ENCODE measurements at regions of chr4 and their contacts with region 1.

Region 1: GRCh38 chr4:139651282-139652194 is 14.1 kb upstream of the MGST2 start:
- DNase-seq: peak; percentile 52
- H3K4me3 Mint-ChIP-seq: no peak overlapping the region
- H3K27ac Mint-ChIP-seq: no peak overlapping the region
- H3K4me1 Mint-ChIP-seq: peaks cover 8% of the 10 kb centered on the region
- H3K27me3 Mint-ChIP-seq: no peaks in the 10 kb centered on the region

Region 2: GRCh38 chr4:139416073-139416673 is 235.4 kb before region 1 on chr4:
- intact Hi-C with region 1: loop called (anchors 10 kb)
- DNase-seq: no peak
- H3K4me3 Mint-ChIP-seq: no peak overlapping the region
- H3K27ac Mint-ChIP-seq: no peak overlapping the region
- H3K4me1 Mint-ChIP-seq: peaks cover 8% of the 10 kb centered on the region
- H3K27me3 Mint-ChIP-seq: no peaks in the 10 kb centered on the region

Region 3: DNA sequence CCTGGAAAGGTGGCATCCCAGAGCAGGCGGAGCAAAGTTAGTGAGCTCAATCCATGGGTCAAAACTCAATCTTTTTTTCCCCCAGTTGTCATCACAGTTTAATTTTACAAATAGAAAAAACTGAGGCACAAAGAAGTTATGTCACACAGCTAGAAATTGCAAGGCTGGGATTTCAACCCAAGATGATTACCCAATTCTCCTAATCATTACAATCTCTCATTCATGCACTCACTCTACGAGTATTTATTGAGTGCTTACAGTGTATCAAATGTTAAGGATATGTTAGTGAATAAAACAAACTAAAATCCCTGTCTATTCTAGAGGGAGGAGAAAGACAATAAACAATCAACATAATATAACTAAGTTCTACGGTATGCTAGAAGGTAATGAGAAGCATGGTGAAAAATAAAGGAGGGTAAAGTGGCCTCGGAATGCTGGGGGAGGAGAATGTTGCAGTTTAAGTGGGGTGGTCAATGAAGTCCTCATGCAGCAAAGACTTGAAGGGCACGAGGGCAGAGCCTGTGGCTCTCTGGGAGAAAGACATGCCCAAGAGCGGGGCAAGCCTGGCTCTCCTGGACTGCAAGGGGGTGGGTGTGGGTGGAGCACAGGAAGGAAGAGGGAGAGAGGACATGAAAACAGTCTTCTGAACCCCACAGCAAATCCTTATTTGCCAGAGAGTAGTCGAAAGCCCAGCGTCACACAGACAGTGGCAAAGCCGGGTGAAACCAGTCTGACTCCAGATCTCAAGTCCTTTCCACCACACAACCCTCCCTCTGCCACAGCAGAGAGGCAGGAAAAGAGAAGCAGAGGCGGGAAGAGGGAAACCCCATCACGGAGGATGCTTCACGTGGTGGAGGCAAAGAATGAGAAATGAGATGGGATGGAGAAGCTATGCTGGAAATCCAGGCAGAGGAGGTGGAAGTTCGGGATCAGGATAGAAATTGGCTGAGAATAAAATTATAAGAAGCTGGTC is 149.3 kb before region 1 on chr4:
- intact Hi-C with region 1: loop called (anchors 2 kb)
- DNase-seq: no peak
- H3K4me3 Mint-ChIP-seq: no peak overlapping the region
- H3K27ac Mint-ChIP-seq: no peak overlapping the region
- H3K4me1 Mint-ChIP-seq: peaks cover 9% of the 10 kb centered on the region
- H3K27me3 Mint-ChIP-seq: no peaks in the 10 kb centered on the region

Region 4: DNA sequence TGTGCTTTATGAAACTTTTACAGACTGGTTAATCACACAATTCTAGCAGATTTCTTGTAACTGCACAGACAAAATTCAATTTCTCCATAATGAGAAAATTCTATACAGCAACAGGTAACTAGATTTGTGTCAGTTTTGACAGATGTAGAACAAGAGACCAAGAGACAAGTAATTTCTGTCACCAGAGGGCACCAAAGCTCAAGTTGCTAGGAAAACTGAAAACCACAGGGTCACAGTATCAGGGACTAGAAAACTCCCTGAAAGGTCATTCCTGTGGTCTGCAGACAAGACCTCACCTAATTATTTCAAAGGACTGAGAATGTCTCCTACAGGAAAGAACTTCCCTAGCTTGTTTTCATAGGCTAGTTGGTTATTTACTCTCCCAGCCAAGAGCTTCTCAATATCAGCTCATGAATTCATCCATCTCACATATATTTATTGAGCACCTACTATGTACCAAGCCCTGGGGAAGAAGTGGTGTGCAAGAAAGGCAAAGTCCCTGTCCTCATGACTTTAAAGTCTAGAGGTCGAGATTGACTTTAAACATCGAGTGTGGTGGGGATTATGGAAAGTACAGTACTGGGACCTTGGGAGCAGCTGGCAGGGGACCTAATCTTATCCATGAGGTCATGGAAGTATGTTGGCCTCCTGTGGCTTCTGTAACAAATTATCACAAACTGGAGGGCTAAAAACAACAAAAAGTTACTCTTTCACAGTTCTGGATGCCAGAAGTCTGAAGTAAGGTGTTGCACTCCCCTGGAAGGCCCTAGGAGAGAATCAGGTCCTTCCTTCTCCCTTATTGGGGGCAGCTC is 47.8 kb before region 1 on chr4:
- intact Hi-C with region 1: loop called (anchors 1 kb)
- DNase-seq: no peak
- H3K4me3 Mint-ChIP-seq: no peak overlapping the region
- H3K27ac Mint-ChIP-seq: no peak overlapping the region
- H3K4me1 Mint-ChIP-seq: peaks cover 15% of the 10 kb centered on the region
- H3K27me3 Mint-ChIP-seq: peaks cover 16% of the 10 kb centered on the region

Region 5: DNA sequence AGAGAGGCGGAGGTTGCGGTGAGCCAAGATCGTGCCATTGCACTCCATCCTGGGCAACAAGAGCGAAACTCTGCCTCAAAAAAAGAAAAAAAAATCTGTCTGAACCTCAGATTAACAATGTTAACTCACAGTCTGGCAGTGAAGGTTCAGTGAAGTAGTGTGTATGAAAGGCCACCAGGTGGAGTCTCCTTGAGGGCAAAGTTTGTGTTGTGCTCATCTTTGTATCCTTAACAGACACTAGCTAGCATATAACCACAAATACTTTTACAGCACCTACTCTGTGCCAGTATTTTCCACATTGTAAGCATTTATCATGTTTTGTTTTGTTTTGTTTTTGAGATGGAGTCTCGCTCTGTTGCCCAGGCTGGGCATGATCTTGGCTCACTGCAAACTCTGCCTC is 31.9 kb before region 1 on chr4:
- intact Hi-C with region 1: loop called (anchors 1 kb)
- DNase-seq: no peak
- H3K4me3 Mint-ChIP-seq: no peak overlapping the region
- H3K27ac Mint-ChIP-seq: no peak overlapping the region
- H3K4me1 Mint-ChIP-seq: no peaks in the 10 kb centered on the region
- H3K27me3 Mint-ChIP-seq: peaks cover 11% of the 10 kb centered on the region